Activated CD4-positive, alpha-beta T cell treated with anti-CD3 and anti-CD28 coated beads, Interleukin-2, amount 10 ng/mL, durations not matched to agents 24 days and 14 days (primary cell): ENCODE measurements at regions of chr7 and their contacts with region 1.

Region 1: GRCh38 chr7:38222481-38223096 is 44.5 kb downstream of the STARD3NL start:
- DNase-seq: peak; percentile 86
- H3K4me3 Mint-ChIP-seq: no peak overlapping the region
- H3K27ac Mint-ChIP-seq: no peak overlapping the region
- H3K4me1 Mint-ChIP-seq: peaks cover 27% of the 10 kb centered on the region
- H3K27me3 Mint-ChIP-seq: no peaks in the 10 kb centered on the region

Region 2: DNA sequence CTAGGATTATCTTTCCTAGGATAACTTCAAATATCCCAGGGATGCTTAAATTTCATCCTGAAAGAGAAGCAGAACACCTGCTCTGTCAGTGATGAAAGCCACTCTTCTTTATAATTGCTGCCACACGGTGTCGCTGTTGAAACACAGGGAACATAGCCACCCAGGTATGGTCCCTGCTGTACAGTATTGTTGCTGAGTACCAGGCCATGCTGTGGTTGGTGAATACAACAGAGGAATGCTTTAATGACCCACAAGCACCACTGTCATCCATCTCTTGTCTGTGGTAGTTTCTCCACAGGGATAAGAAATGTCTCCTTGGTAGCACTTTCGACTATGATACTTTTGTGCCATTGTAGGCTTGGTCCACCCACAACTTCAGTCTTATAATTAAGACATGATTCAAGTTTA is 115.1 kb before region 1 on chr7:
- intact Hi-C with region 1: loop called (anchors 1 kb)
- DNase-seq: peak; percentile 90
- H3K4me3 Mint-ChIP-seq: no peak overlapping the region
- H3K27ac Mint-ChIP-seq: no peak overlapping the region
- H3K4me1 Mint-ChIP-seq: no peaks in the 10 kb centered on the region
- H3K27me3 Mint-ChIP-seq: peaks cover 40% of the 10 kb centered on the region